A549 (cell line): ENCODE measurements at regions of chr15 and their contacts with region 1.

Region 1: DNA sequence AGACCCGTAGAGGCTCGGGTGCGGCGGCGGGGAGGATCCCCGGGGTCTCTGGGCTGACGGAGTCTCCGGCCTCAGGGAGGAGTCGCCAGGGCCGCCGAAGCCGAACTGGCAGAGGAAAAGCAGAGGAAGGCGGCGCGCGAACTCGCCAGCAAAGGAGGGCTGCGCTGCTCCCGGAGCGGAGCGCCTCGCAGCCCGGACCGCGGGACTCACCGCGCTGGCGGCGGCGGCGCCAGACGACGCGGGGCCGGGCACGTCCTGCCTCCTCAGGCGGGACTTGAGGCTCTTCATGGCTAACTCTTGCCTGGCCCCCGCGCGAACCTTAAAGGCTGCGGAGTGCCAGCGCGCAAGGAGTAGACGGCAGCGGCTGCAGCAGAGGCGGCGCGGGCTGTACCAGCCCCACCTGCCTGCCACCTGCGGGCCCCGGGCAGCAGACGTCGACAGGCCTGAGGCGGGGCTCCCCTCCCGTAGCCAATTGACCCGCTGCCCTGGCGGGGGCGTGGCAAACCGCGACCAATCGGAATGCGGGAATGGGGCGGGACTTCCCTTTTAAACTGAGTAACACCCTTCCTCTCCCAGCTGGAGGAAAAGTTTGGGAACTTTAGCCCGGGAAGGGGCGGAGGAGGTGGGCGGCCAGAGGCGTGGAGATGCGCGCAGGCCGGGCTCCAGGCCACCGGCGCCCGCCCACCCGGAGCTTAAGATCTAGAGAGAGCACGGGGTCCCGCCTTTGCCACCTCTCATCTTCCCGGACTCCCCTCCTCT is at the start of gene UACA:
- DNase-seq: peak; percentile 98 to 99
- ATAC-seq: peak; percentile 92 to 95
- H3K4me3 ChIP-seq: peak within 1 kb of the TSS; percentile 93
- H3K27ac ChIP-seq: peak within 1 kb of the TSS; percentile 92 to 95
- H3K4me1 ChIP-seq: peaks cover 49% of the 10 kb centered on the region
- CTCF ChIP-seq: no peak
- EP300 ChIP-seq: no peak
- POLR2A ChIP-seq: peak; percentile 91
- RAD21 ChIP-seq: peak in 1 of 2 experiments; percentile 13; a peak in 1 of 5 replicates
- polyA plus RNA-seq, gene UACA: 80.4 and 81.1 TPM in 2 replicates

Region 2: DNA sequence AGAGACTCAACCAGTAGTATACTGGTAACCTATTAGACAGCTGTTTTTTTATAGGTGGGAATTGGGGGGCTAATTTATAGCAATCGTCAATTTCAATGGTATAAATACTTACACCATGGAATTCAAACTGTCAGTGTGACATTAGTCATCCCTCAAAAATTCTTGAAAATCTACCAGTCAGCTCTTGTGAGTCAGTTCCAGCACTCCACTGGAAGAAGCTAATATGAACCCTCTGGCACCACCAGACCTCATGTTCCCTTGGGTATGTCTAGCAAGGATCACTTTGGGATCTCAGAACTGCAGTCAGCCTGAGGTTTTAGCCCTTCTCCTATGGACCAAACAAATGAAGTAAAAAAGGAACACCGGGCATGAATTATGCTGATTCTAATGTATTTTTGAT is 11.9 kb after region 1 on chr15:
- CTCF ChIA-PET with region 1: interaction called, 4 read pairs
- POLR2A ChIA-PET with region 1: interaction called, 13 read pairs
- DNase-seq: peak; percentile 36 to 53
- ATAC-seq: peak in 1 of 2 experiments; percentile 54; a peak in 3 of 6 replicates
- H3K4me3 ChIP-seq: no peak overlapping the region
- H3K27ac ChIP-seq: peak overlapping the region; percentile 2 to 55; a peak in 2 of 6 replicates
- H3K4me1 ChIP-seq: peaks cover 42% of the 10 kb centered on the region
- CTCF ChIP-seq: no peak
- EP300 ChIP-seq: no peak
- POLR2A ChIP-seq: no peak
- RAD21 ChIP-seq: no peak

Region 3: DNA sequence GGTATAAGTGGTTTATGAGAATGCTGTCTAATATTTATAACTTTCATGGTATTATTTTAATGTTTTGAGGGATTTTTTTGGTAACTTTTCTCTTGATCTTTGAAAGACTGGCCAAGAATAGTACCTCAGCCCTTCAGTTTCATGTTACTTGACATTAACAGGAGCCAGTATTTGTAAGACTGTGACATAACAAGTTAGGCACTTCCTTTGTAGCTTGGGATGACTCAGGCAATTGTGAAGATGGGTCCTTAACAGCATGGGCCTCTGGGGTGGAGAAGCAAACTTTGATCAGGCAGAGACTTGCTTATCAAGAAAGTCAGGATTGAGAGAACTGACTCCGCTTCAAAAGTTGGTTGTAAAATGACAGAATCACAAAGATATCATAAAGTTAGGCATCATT is 138.8 kb after region 1 on chr15:
- CTCF ChIA-PET with region 1: no interaction called
- POLR2A ChIA-PET with region 1: no interaction called
- DNase-seq: peak in 1 of 2 experiments; percentile 63
- ATAC-seq: peak; percentile 30 to 68; a peak in 4 of 6 replicates
- H3K4me3 ChIP-seq: no peak overlapping the region
- H3K27ac ChIP-seq: peak overlapping the region in 1 of 2 experiments; percentile 42; a peak in 3 of 6 replicates
- H3K4me1 ChIP-seq: peaks cover 9% of the 10 kb centered on the region; the same call in 2 of the 3 replicates
- CTCF ChIP-seq: no peak
- EP300 ChIP-seq: no peak
- POLR2A ChIP-seq: no peak
- RAD21 ChIP-seq: no peak